ENCODE measurements at regions of chr2 and their contacts with region 1.

Region 1: DNA sequence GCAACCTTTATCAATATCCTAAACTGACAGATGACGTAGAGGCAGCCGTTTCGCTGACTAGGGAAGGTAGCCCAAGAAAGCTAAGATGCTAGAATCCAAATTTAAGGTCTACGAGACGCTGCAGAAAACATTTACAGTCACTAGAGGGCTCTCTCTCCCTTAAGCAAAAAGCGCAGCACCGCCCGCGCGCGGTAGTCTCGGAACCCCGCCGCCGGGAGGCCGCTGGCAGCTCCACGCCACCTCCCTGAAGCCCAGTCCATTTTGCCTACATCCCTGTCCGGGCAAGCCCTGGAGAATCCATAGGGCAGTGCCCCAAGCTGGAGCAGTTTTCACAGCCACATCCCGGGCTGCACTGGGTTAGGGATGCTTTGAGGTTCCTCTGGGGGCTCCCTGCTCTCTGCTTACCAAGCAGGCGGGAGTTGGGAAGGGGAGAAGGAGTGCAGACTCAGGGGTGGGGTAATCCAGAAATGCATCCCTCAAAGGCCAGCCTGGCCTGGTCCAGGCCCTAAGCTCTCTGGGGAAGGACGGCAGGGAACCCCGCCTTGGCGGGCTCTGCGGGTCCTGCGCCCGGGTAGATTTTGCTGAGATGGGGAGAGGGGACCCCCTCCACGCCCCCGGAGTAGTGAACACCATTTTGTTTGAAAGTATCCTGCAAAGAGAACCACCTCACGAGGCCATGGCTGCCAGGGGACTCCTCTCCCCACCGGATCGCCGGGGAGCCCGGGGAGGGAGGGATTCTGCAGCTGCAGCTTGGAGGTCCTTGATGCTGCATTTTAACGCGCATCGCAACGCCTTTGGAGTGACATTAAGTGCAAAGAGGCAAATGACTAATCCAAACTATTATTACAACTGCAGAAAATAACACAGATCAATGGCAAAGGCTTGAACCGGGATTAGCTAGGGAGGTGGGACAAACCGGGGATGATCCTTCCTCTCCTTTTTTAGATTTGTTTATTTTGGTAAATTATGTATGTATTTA is 1.3 kb upstream of the DPYSL5 start:
- DNase-seq: peak; percentile 71
- H3K4me3 Mint-ChIP-seq: no peak overlapping the region
- H3K27ac Mint-ChIP-seq: no peak overlapping the region
- H3K4me1 Mint-ChIP-seq: peaks cover 11% of the 10 kb centered on the region
- H3K27me3 Mint-ChIP-seq: peaks cover 43% of the 10 kb centered on the region

Region 2: GRCh38 chr2:26922405-26923188 is 76.0 kb after region 1 on chr2:
- CTCF ChIA-PET with region 1: interaction called, 63 read pairs
- POLR2A ChIA-PET with region 1: no interaction called
- intact Hi-C with region 1: loop called (anchors 2 kb)
- DNase-seq: peak; percentile 60
- H3K4me3 Mint-ChIP-seq: no peak overlapping the region
- H3K27ac Mint-ChIP-seq: no peak overlapping the region
- H3K4me1 Mint-ChIP-seq: peaks cover 8% of the 10 kb centered on the region
- H3K27me3 Mint-ChIP-seq: peaks cover 11% of the 10 kb centered on the region

Region 3: DNA sequence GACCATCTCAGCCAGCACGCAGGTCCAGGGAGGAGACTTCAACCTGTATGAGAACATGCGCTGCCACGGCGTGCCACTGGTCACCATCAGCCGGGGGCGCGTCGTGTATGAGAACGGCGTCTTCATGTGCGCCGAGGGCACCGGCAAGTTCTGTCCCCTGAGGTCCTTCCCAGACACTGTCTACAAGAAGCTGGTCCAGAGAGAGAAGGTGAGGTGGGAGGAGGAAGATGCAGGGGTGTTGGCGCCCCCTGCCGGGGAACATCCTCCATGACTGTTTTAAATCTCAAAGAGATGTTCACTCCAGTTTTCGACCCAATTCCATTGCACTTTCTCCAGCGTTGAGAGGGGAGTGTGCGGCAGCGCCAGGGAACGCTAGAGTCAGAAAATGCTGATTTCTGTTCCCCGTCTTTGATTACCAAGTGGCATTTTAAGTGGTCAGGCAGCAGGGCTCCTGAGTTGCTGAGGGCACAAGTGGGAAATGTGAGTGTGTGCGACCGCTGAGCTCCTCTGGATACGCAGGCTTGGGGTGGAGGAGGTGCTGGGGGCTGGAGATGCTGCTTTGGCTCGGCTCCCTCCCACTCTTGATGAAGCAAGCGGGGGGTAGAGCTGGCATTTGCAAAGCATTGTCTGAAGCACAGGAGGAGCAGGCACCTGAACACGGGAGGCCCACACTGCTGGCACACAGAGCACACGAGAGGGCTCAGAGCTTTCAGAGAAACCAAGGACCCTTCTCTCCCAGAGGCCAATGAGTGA is 96.1 kb after region 1 on chr2:
- CTCF ChIA-PET with region 1: interaction called, 229 read pairs
- POLR2A ChIA-PET with region 1: interaction called, 3 read pairs
- intact Hi-C with region 1: loop called (anchors 1 kb)
- DNase-seq: peak; percentile 78
- H3K4me3 Mint-ChIP-seq: no peak overlapping the region
- H3K27ac Mint-ChIP-seq: no peak overlapping the region
- H3K4me1 Mint-ChIP-seq: peaks cover 2% of the 10 kb centered on the region
- H3K27me3 Mint-ChIP-seq: peaks cover 17% of the 10 kb centered on the region

Region 4: DNA sequence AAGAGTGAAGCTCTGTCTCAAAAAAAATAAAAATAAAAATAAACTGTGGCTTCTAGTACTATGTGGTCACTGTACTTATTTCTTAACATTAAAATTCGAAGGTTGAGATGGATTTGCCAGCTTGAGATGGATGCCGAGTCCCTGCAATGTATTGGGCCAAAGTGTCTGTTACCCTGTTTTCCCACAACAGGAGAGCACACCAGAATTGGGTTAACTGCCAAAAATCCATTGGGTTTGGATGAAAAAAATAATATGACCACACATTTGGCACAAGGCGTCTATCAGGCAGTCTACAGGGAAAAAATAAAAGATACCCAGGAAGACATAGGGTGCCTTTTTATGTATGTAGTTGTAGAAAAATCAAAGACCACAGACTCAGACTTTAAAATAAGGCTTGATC is 104.6 kb after region 1 on chr2:
- CTCF ChIA-PET with region 1: interaction called, 11 read pairs
- POLR2A ChIA-PET with region 1: no interaction called
- intact Hi-C with region 1: no loop called
- DNase-seq: no peak
- H3K4me3 Mint-ChIP-seq: no peak overlapping the region
- H3K27ac Mint-ChIP-seq: no peak overlapping the region
- H3K4me1 Mint-ChIP-seq: no peaks in the 10 kb centered on the region
- H3K27me3 Mint-ChIP-seq: peaks cover 18% of the 10 kb centered on the region

Region 5: GRCh38 chr2:26970244-26970920 is 123.8 kb after region 1 on chr2 and contains the start of gene MAPRE3:
- CTCF ChIA-PET with region 1: interaction called, 11 read pairs
- POLR2A ChIA-PET with region 1: no interaction called
- intact Hi-C with region 1: no loop called
- DNase-seq: peak; percentile 85
- H3K4me3 Mint-ChIP-seq: peak within 1 kb of the TSS; percentile 73
- H3K27ac Mint-ChIP-seq: no peak within 1 kb of the TSS
- H3K4me1 Mint-ChIP-seq: peaks cover 15% of the 10 kb centered on the region
- H3K27me3 Mint-ChIP-seq: peaks cover 17% of the 10 kb centered on the region
- total RNA-seq, gene MAPRE3: 4.4 TPM

Region 6: DNA sequence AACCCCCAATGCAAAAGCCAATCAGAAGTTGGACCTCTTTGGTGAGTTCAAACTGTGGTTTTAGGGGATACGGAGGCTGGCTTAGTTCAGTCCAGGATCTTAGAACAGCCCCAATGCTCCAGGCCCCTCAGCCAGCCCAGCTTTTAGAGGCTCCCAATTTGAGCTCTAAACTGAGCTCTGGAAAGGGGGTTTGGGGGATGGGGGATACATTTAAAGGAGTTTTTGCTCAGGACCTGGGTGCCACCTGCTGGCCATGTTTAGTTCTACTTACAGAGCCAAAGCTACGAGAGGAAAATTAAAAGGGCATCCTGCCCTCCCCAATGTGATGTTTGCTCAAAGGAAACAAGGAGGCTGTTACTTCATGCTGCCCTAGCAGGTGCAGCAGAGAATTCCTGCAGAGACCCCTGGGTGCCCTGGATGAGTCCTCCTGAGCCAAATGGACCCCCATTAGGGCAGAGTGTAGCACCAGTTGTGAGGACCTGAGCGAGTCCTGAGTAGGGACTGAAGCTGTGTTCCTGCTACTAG is 170.2 kb after region 1 on chr2:
- CTCF ChIA-PET with region 1: interaction called, 30 read pairs
- POLR2A ChIA-PET with region 1: no interaction called
- intact Hi-C with region 1: loop called (anchors 10 kb)
- DNase-seq: peak; percentile 54
- H3K4me3 Mint-ChIP-seq: no peak overlapping the region
- H3K27ac Mint-ChIP-seq: no peak overlapping the region
- H3K4me1 Mint-ChIP-seq: no peaks in the 10 kb centered on the region
- H3K27me3 Mint-ChIP-seq: no peaks in the 10 kb centered on the region

Region 7: GRCh38 chr2:27217217-27218121 is 370.9 kb after region 1 on chr2 and contains the start of gene CAD:
- CTCF ChIA-PET with region 1: no interaction called
- POLR2A ChIA-PET with region 1: no interaction called
- intact Hi-C with region 1: loop called (anchors 5 kb)
- DNase-seq: peak; percentile 91
- H3K4me3 Mint-ChIP-seq: peak within 1 kb of the TSS; percentile 93
- H3K27ac Mint-ChIP-seq: peak within 1 kb of the TSS; percentile 89
- H3K4me1 Mint-ChIP-seq: peaks cover 47% of the 10 kb centered on the region
- H3K27me3 Mint-ChIP-seq: no peaks in the 10 kb centered on the region
- total RNA-seq, gene CAD: 99.7 to 102 TPM